Caco-2 (cell line): ENCODE measurements at regions of chr7 and their contacts with region 1.

Region 1: DNA sequence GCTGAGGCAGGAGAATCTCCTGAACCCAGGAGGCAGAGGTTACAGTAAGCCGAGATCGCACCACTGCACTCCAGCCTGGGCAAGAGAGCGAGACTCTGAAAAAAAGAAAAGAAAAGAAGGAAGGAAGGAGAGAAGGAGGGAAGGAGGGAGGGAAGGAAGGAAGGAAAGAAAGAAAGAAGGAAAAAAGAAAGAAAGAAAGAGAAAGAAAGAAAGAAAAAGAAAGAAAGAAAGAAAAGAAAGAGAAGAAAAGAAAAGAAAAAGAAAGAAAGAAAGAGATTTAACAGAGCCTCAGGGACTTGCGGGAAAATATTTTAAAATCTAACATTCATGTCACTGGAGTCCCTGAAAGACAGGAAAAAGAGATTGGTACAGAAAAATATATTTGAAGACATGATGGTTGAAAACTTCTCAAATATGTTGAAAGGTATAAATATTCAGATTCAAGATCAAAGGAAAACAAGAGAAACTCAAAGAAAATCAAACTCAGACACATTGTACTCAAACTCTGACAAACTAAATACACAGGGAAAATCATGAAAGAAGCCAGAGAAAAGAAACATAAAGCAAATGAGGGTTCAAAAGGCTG is 25.3 kb upstream of the DNAAF5 start:
- DNase-seq: no peak
- H3K4me3 ChIP-seq: no peak overlapping the region
- H3K4me3 Mint-ChIP-seq: no peak overlapping the region
- H3K27ac Mint-ChIP-seq: no peak overlapping the region
- H3K4me1 ChIP-seq: no peaks in the 10 kb centered on the region
- H3K4me1 Mint-ChIP-seq: peaks cover 12% of the 10 kb centered on the region
- H3K27me3 ChIP-seq: no peaks in the 10 kb centered on the region
- H3K27me3 Mint-ChIP-seq: no peaks in the 10 kb centered on the region
- CTCF ChIP-seq: no peak

Region 2: DNA sequence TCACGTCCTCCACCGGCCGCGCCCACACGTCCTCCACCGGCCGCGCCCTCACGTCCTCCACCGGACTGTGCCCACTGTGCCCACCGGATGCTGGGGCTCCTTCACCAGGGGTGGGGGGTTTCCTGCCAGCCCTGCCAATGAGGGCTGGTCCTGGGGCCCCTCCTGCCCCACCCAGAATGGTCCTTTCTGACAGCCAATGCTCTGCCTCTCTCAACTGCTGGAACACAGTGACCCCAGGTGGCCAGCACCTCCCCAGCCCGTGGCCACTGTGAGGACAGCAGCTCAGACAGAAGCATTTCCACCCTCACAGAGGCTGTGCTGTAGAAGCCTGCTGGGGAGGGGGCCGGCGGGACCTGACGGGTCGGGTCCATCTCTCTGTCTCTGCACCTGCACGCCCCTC is 64.8 kb before region 1 on chr7:
- CTCF ChIA-PET with region 1: no interaction called
- POLR2A ChIA-PET with region 1: interaction called, 14 read pairs
- intact Hi-C with region 1: no loop called
- DNase-seq: peak in 1 of 2 experiments; percentile 38
- H3K4me3 ChIP-seq: no peak overlapping the region
- H3K4me3 Mint-ChIP-seq: no peak overlapping the region
- H3K27ac Mint-ChIP-seq: no peak overlapping the region
- H3K4me1 ChIP-seq: no peaks in the 10 kb centered on the region
- H3K4me1 Mint-ChIP-seq: no peaks in the 10 kb centered on the region
- H3K27me3 ChIP-seq: no peaks in the 10 kb centered on the region
- H3K27me3 Mint-ChIP-seq: no peaks in the 10 kb centered on the region
- CTCF ChIP-seq: peak; percentile 15 to 39